ENCODE measurements at regions of chrX and their contacts with region 1.

Region 1: DNA sequence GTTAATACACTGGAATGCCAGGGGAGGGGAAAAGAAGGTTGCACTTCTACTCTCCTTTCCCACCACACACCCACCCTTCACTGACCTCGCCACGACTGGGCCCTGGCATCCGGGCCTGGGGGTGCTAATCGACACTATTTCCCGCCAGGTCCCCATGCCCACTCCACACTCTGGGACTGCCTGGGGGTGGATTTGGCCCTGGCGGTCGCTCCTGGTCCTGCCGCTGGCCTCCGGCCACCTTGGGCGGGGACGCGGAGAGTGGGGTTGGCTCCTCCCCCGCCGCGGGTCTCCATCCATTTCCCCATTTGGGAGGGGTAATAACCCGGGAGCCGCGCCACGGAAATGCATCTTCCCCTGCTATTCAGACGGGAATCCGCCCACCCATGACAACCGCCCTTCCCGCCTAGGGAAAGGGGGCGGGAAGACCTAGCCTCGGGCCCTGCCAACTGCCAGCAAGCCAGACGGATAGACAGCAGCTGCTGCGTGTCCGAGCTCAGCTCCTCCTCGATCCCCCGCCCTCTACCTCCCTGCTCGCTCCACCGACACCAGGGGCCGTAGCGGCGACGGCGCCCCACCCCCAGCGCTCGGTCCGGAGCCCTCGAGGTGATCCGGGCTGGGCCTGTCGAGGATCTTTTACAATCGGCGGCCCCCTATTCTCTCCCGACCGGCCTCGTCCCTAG is 78.1 kb downstream of the RLIM start:
- DNase-seq: peak in 6 of 9 experiments; percentile 11 to 53 (median 28)
- ATAC-seq: peak; percentile 41
- H3K4me3 ChIP-seq: peak overlapping the region; percentile 65 to 70
- H3K4me3 Mint-ChIP-seq: peak overlapping the region; percentile 85
- H3K27ac ChIP-seq: peak overlapping the region; percentile 37 to 63
- H3K27ac Mint-ChIP-seq: peak overlapping the region; percentile 77
- H3K4me1 ChIP-seq: peaks cover 4% of the 10 kb centered on the region
- H3K4me1 Mint-ChIP-seq: peaks cover 15% of the 10 kb centered on the region
- H3K27me3 ChIP-seq: no peaks in the 10 kb centered on the region
- H3K27me3 Mint-ChIP-seq: no peaks in the 10 kb centered on the region
- CTCF ChIP-seq: no peak

Region 2: DNA sequence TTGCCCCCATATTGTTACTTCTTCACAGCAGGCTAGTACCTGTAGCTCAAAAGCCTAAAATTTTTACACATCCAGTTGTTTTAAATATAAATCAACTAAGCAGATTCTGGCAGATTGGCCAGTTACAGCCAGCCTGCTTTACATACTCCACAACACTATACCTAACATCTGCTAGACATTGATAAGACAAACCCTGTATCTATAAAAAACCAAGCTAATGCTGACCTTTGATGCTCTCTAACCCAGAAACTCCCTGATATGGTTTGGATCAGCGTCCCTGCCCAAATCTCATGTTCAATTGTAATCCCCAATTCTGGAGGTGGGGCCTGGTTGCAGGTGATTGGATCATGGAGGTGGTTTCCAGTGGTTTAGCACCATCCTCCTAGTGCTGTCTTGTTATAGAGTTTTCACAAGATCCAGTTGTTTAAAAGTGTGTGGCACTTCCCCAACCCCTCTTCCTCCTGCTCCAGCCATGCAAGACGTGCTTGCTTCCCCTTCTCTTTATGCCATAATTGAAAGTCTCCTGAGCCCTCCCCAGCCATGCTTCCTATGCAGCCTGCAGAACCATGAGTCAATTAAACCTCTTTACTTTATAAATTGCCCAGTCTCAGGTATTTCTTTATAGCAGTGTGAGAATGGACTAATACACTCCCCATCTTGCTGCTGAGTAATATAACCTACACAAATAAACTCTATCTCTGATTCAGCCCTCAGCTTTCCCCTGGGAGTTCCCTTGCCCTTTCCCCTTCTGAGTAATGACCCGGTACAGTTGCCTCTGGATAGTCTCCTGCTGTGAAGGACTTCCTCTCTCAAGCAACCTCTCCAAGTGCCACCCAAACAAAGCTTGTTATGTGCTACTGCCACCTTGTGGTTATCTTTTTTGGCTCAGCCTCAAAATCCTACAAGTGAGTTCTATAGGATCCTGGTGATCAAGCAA is 192.7 kb before region 1 on chrX:
- CTCF ChIA-PET with region 1: no interaction called
- POLR2A ChIA-PET with region 1: no interaction called
- intact Hi-C with region 1: no loop called
- DNase-seq: peak; percentile 1 to 67 (median 33)
- ATAC-seq: peak; percentile 40
- H3K4me3 ChIP-seq: no peak overlapping the region
- H3K4me3 Mint-ChIP-seq: no peak overlapping the region
- H3K27ac ChIP-seq: no peak overlapping the region
- H3K27ac Mint-ChIP-seq: no peak overlapping the region
- H3K4me1 ChIP-seq: no peaks in the 10 kb centered on the region
- H3K4me1 Mint-ChIP-seq: peaks cover 2% of the 10 kb centered on the region
- H3K27me3 ChIP-seq: no peaks in the 10 kb centered on the region
- H3K27me3 Mint-ChIP-seq: peaks cover 3% of the 10 kb centered on the region
- CTCF ChIP-seq: peak; percentile 36

Region 3: GRCh38 chrX:74382613-74383012 is 153.7 kb before region 1 on chrX:
- CTCF ChIA-PET with region 1: interaction called, 5 read pairs
- POLR2A ChIA-PET with region 1: no interaction called
- intact Hi-C with region 1: loop called in 1 of 2 experiments (anchors 5 kb)
- DNase-seq: peak; percentile 5 to 67 (median 51)
- ATAC-seq: no peak
- H3K4me3 ChIP-seq: no peak overlapping the region
- H3K4me3 Mint-ChIP-seq: no peak overlapping the region
- H3K27ac ChIP-seq: no peak overlapping the region
- H3K27ac Mint-ChIP-seq: no peak overlapping the region
- H3K4me1 ChIP-seq: no peaks in the 10 kb centered on the region
- H3K4me1 Mint-ChIP-seq: no peaks in the 10 kb centered on the region
- H3K27me3 ChIP-seq: no peaks in the 10 kb centered on the region
- H3K27me3 Mint-ChIP-seq: peaks cover 5% of the 10 kb centered on the region
- CTCF ChIP-seq: peak; percentile 29

Region 4: DNA sequence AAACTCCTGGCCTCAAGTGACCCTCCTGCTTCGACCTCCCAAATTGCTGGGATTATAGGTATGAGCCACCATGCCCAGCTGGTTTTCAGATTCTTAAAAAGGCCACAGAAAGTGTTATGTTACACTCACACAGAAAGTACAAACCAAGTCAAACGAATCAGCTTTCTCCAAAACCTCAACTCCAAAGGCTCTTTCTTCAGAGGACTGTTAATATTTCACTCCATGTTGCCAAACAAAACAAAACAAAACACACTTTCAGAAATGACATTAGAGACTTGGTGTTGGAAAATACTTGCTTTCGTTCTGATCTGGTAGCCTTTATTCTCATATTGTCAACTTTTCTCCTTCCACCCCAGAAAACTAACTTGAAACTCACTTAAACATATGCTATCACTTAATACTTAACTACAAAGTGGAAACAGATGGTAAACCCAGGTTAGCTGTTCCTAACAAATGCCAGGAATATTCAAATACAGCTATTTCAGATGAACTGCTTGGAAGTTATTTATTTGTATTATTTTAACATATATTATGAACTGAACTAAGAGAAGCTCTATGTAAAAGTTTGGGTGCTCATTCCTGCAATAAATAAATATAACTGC is 43.4 kb after region 1 on chrX:
- CTCF ChIA-PET with region 1: no interaction called
- POLR2A ChIA-PET with region 1: no interaction called
- intact Hi-C with region 1: no loop called
- DNase-seq: no peak
- ATAC-seq: no peak
- H3K4me3 ChIP-seq: no peak overlapping the region
- H3K4me3 Mint-ChIP-seq: no peak overlapping the region
- H3K27ac ChIP-seq: no peak overlapping the region
- H3K27ac Mint-ChIP-seq: no peak overlapping the region
- H3K4me1 ChIP-seq: no peaks in the 10 kb centered on the region
- H3K4me1 Mint-ChIP-seq: peaks cover 1% of the 10 kb centered on the region
- H3K27me3 ChIP-seq: no peaks in the 10 kb centered on the region
- H3K27me3 Mint-ChIP-seq: no peaks in the 10 kb centered on the region
- CTCF ChIP-seq: no peak

Region 5: DNA sequence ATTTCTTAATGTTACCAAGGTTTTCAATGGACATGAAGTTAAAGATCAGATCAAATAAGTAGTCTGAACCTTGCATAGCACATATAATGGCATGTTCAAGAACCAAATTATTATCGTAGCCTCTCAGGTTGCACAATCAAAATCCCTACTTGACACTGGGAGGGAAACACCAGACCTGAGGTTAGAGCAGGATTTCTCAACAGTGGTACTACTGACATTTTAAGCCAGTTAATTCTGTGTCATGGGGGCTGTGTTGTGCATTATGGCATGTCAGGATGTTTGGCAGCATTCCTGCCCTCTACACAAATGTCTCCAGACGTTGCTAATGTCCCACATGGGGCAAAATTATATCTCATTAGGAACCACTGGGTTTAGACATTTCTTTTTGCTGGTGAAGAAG is 57.3 kb after region 1 on chrX:
- CTCF ChIA-PET with region 1: no interaction called
- POLR2A ChIA-PET with region 1: no interaction called
- intact Hi-C with region 1: no loop called
- DNase-seq: no peak
- ATAC-seq: no peak
- H3K4me3 ChIP-seq: no peak overlapping the region
- H3K4me3 Mint-ChIP-seq: no peak overlapping the region
- H3K27ac ChIP-seq: no peak overlapping the region
- H3K27ac Mint-ChIP-seq: no peak overlapping the region
- H3K4me1 ChIP-seq: no peaks in the 10 kb centered on the region
- H3K4me1 Mint-ChIP-seq: peaks cover 8% of the 10 kb centered on the region
- H3K27me3 ChIP-seq: no peaks in the 10 kb centered on the region
- H3K27me3 Mint-ChIP-seq: no peaks in the 10 kb centered on the region
- CTCF ChIP-seq: no peak